OCI-LY7 (cell line): ENCODE measurements at regions of chr6 and their contacts with region 1.

Region 1: GRCh38 chr6:18323935-18324705 is 59.8 kb upstream of the DEK start:
- DNase-seq: peak; percentile 90
- H3K4me3 ChIP-seq: peak overlapping the region; percentile 38
- H3K27ac ChIP-seq: peak overlapping the region; percentile 43
- H3K4me1 ChIP-seq: peaks cover 66% of the 10 kb centered on the region
- CTCF ChIP-seq: peak; percentile 98

Region 2: GRCh38 chr6:18264219-18264922 is 59.7 kb before region 1 on chr6 and contains the start of gene DEK:
- CTCF ChIA-PET with region 1: no interaction called
- POLR2A ChIA-PET with region 1: interaction called, 7 read pairs
- intact Hi-C with region 1: loop called (anchors 1 kb)
- DNase-seq: peak; percentile 86
- H3K4me3 ChIP-seq: peak within 1 kb of the TSS; percentile 90
- H3K27ac ChIP-seq: peak within 1 kb of the TSS; percentile 91
- H3K4me1 ChIP-seq: peaks cover 44% of the 10 kb centered on the region
- CTCF ChIP-seq: peak; percentile 73
- total RNA-seq, gene DEK: 235 and 462 TPM in 2 replicates

Region 3: DNA sequence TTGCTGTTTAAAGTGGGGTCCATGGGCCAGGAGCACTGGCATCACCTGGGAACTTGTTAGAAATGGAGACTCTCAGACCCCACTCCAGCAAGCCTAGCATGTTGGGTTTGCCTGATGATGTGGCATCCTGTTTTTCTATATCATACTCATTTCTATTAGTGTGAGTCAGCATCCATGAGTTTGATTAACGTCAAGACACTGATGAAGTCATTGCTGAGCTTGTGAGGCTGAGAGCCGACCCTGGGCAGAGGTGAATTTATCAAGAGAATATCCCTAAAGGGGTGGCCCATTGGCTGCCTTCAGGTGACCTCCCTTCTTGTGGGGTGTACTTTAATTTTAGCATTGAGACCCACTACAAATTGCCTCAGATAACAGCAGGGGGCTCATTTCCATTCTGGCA is 19.6 kb after region 1 on chr6:
- CTCF ChIA-PET with region 1: interaction called, 4 read pairs
- POLR2A ChIA-PET with region 1: interaction called, 183 read pairs
- intact Hi-C with region 1: no loop called
- DNase-seq: no peak
- H3K4me3 ChIP-seq: peak overlapping the region; percentile 26
- H3K27ac ChIP-seq: peak overlapping the region; percentile 89
- H3K4me1 ChIP-seq: peaks cover 72% of the 10 kb centered on the region
- CTCF ChIP-seq: peak; percentile 44; the same call in 1 of the 2 replicates

Region 4: DNA sequence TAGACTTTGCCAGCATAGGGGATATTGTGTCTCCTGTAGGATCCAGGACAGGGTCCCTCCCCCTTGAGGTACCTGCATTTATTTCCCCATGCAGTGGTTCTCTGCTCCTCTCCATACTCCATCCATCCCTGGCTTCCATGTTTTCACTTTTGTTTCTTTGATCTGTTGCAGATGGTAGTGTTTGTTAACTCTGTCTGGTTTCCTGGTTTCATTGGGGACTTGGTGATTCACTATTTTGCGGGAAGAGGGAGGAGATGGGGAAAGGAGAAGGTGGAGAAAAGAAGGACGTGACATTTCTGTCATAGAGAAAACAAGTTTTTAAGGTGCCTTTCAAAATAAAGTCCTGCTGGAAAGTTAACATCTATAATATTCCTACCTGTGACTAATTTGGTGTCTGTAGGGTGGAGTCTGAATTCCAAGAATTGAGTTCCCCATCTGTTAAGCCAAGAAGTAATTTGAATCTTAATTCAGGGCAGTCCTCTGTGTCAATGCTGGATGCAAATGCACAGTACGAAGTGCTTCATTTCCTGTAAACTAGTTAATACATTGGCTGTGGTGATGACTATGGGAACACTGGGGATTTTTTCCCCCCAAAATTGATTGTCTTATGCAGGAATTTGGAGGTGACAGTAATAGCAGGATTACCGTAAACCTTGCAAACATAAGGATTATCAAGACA is 56.2 kb after region 1 on chr6:
- CTCF ChIA-PET with region 1: no interaction called
- POLR2A ChIA-PET with region 1: interaction called, 128 read pairs
- intact Hi-C with region 1: no loop called
- DNase-seq: peak; percentile 44
- H3K4me3 ChIP-seq: peak overlapping the region; percentile 65
- H3K27ac ChIP-seq: peak overlapping the region; percentile 66
- H3K4me1 ChIP-seq: peaks cover 62% of the 10 kb centered on the region
- CTCF ChIP-seq: no peak

Region 5: GRCh38 chr6:18392346-18392884 is 68.3 kb after region 1 on chr6:
- CTCF ChIA-PET with region 1: interaction called, 3 read pairs
- POLR2A ChIA-PET with region 1: interaction called, 128 read pairs
- intact Hi-C with region 1: loop called (anchors 1 kb)
- DNase-seq: peak; percentile 51
- H3K4me3 ChIP-seq: peak overlapping the region; percentile 48
- H3K27ac ChIP-seq: peak overlapping the region; percentile 58
- H3K4me1 ChIP-seq: peaks cover 63% of the 10 kb centered on the region
- CTCF ChIP-seq: peak; percentile 75

Region 6: GRCh38 chr6:18823782-18824386 is 499.8 kb after region 1 on chr6:
- CTCF ChIA-PET with region 1: no interaction called
- POLR2A ChIA-PET with region 1: no interaction called
- intact Hi-C with region 1: loop called (anchors 10 kb)
- DNase-seq: peak; percentile 77
- H3K4me3 ChIP-seq: no peak overlapping the region
- H3K27ac ChIP-seq: no peak overlapping the region
- H3K4me1 ChIP-seq: no peaks in the 10 kb centered on the region
- CTCF ChIP-seq: peak; percentile 98